ENCODE measurements at regions of chr12 and their contacts with region 1.

Region 1: GRCh38 chr12:8622646-8623045 is 10.0 kb upstream of the AICDA start:
- DNase-seq: no peak
- H3K4me3 ChIP-seq: no peak overlapping the region
- H3K4me3 Mint-ChIP-seq: no peak overlapping the region
- H3K27ac ChIP-seq: no peak overlapping the region
- H3K27ac Mint-ChIP-seq: no peak overlapping the region
- H3K4me1 ChIP-seq: no peaks in the 10 kb centered on the region
- H3K4me1 Mint-ChIP-seq: peaks cover 0 to 1% (median 0%) of the 10 kb centered on the region in 4 donors
- H3K27me3 ChIP-seq: no peaks in the 10 kb centered on the region
- H3K27me3 Mint-ChIP-seq: no peaks in the 10 kb centered on the region

Region 2: GRCh38 chr12:8609061-8609570 is 13.5 kb before region 1 on chr12:
- CTCF ChIA-PET with region 1: interaction called, 40 read pairs
- POLR2A ChIA-PET with region 1: no interaction called
- intact Hi-C with region 1: no loop called
- DNase-seq: peak in 3 of 5 donors; percentile 2 to 10 (median 6)
- H3K4me3 ChIP-seq: no peak overlapping the region
- H3K4me3 Mint-ChIP-seq: peak overlapping the region; percentile 52 to 80 (median 72)
- H3K27ac ChIP-seq: no peak overlapping the region
- H3K27ac Mint-ChIP-seq: peak overlapping the region in 3 of 7 donors; percentile 3 to 57 (median 38)
- H3K4me1 ChIP-seq: peaks cover 5% of the 10 kb centered on the region
- H3K4me1 Mint-ChIP-seq: peaks cover 10 to 21% (median 15%) of the 10 kb centered on the region in 4 donors
- H3K27me3 ChIP-seq: no peaks in the 10 kb centered on the region
- H3K27me3 Mint-ChIP-seq: peaks cover 4% of the 10 kb centered on the region in 2 donors

Region 3: DNA sequence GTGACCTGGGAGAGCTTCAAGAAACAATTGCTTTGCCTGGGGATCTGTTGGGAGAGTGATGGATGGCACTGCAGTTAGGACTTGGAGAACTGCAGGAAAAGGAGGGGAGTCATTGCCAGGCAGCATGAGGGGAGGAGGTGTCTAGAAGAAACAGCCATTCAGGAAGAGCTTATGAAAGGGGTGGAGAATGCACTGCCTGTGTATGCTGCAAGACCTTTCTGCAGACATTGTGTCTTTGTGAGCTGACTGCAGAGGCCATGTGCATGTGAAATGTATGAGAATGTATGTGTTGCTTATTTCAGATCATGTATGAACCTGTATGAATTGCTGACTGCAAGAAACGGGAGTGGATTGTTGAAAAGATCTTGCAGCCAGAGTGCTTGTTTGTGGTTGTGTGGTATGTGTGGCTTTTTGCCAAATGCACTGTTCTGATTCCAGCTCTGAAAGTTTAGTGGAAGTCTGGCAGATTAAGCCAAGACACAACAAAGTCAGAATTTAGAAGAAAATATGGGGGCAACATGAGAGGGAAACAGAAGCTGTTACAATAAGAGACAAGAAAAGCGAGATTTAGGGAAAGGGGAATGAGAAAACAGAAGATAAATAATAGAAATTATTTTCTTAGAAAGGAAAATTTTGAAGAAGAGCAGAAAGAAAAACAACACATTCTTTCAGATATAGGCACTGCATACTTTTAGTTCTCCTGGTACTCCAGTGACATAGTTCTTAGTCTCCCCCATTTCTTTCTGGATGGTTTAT is 65.4 kb after region 1 on chr12:
- CTCF ChIA-PET with region 1: no interaction called
- POLR2A ChIA-PET with region 1: no interaction called
- intact Hi-C with region 1: no loop called
- DNase-seq: peak in 1 of 5 donors; percentile 1
- H3K4me3 ChIP-seq: no peak overlapping the region
- H3K4me3 Mint-ChIP-seq: no peak overlapping the region
- H3K27ac ChIP-seq: no peak overlapping the region
- H3K27ac Mint-ChIP-seq: no peak overlapping the region
- H3K4me1 ChIP-seq: peaks cover 7% of the 10 kb centered on the region
- H3K4me1 Mint-ChIP-seq: peaks cover 0 to 7% (median 2%) of the 10 kb centered on the region in 4 donors
- H3K27me3 ChIP-seq: no peaks in the 10 kb centered on the region
- H3K27me3 Mint-ChIP-seq: peaks cover 0 to 1% of the 10 kb centered on the region in 2 donors